ENCODE measurements at regions of chr17 and their contacts with region 1.

Region 1: GRCh38 chr17:78421484-78422266 is 43.2 kb downstream of the PGS1 start:
- DNase-seq: peak; percentile 43
- H3K4me3 ChIP-seq: no peak overlapping the region
- H3K27ac ChIP-seq: no peak overlapping the region
- H3K4me1 ChIP-seq: peaks cover 9% of the 10 kb centered on the region
- H3K27me3 ChIP-seq: no peaks in the 10 kb centered on the region
- CTCF ChIP-seq: peak; percentile 97 to 99

Region 2: DNA sequence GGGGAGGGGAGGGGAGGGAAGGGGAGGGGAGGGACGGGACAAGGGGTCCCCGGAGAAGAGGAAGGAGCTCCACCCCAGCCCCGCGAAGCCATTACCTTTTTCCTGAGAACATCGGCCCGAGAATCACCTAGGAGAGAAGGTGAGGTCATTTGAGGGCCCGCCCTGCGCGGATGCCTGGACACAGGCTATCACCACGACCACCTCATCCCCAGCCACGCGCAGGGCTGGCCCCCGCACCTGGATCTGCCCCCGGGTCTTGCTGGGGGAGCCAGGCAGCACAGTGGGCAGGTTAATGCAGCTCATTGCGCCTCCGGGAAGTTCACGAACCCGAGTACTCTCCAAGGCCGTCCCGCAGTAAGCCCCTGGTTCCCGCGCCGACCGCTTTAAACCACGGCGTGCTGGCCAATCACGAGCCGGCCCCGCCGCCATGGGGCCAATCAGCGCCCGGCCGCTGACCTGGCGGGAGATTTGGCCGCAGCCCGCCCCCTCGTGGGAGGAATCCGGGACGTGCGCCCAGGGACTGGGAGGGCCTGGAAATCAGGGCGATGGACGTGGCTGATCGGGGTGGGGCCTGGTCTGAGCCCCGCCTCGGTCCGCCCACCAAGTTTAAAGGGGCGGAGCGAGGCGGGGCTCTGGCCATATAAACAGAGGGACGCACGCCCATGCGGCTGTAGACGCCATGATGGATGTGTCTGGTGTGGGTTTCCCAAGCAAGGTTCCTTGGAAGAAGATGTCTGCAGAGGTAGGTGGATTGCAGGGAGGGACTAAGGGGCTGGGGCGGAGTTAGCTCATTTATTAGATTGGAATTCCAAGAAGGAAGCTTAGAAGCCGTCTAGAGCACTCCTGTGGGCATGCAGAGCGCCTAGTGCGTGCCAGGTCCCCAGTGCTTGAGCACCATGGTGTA is 234.7 kb before region 1 on chr17 and contains the starts of genes AFMID and TK1:
- CTCF ChIA-PET with region 1: no interaction called
- dilution Hi-C with region 1: no loop called
- in situ Hi-C with region 1: no loop called
- intact Hi-C with region 1: no loop called
- DNase-seq: peak; percentile 97
- H3K4me3 ChIP-seq: peak within 1 kb of the TSS; percentile 66 to 75 (median 71)
- H3K27ac ChIP-seq: peak within 1 kb of the TSS; percentile 57
- H3K4me1 ChIP-seq: peaks cover 13% of the 10 kb centered on the region
- H3K27me3 ChIP-seq: no peaks in the 10 kb centered on the region
- CTCF ChIP-seq: peak; percentile 43 to 86
- total RNA-seq, gene AFMID: 16.5 to 32.5 TPM
- total RNA-seq, gene TK1: 7.7 to 79.5 TPM

Region 3: GRCh38 chr17:78250891-78251794 is 170.5 kb before region 1 on chr17:
- CTCF ChIA-PET with region 1: no interaction called
- dilution Hi-C with region 1: no loop called
- in situ Hi-C with region 1: no loop called
- intact Hi-C with region 1: loop called (anchors 1 kb)
- DNase-seq: peak; percentile 81
- H3K4me3 ChIP-seq: peak overlapping the region in 2 of 3 experiments; percentile 27 to 38
- H3K27ac ChIP-seq: no peak overlapping the region
- H3K4me1 ChIP-seq: peaks cover 10% of the 10 kb centered on the region
- H3K27me3 ChIP-seq: no peaks in the 10 kb centered on the region
- CTCF ChIP-seq: peak; percentile 96 to 99

Region 4: DNA sequence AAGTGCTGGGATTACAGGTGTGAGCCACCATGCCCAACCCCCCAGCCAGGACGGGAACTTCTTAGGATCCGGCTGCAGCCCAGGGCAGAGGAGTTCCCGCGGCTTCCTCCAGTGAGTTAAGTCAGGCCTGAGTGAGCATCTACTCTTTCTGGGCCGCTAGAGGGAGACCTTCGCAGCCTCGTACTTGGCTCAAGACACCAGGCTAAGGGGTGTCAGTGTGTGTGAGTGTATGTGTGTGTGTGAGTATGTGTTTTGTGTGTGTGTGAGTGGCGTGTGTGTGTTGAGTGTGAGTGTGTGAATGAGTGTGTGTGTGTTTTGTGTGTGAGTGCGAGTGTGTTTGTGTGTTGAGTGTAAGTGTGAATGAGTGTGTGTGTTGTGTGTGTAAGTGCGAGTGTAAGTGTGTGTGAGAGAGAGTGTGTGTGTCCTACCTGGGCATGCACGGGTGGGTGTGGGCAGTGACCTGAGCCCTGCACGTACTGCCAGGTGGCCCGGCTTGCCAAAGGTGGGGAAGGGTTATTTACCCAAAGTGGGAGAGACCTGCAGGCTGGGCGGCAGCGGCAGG is 131.8 kb before region 1 on chr17:
- CTCF ChIA-PET with region 1: no interaction called
- dilution Hi-C with region 1: loop called (anchors 10 kb)
- in situ Hi-C with region 1: loop called (anchors 5 kb)
- intact Hi-C with region 1: loop called (anchors 1 kb)
- DNase-seq: peak; percentile 80
- H3K4me3 ChIP-seq: no peak overlapping the region
- H3K27ac ChIP-seq: no peak overlapping the region
- H3K4me1 ChIP-seq: peaks cover 9% of the 10 kb centered on the region
- H3K27me3 ChIP-seq: no peaks in the 10 kb centered on the region
- CTCF ChIP-seq: peak; percentile 90 to 91

Region 5: GRCh38 chr17:78360371-78361224 is 61.1 kb before region 1 on chr17:
- CTCF ChIA-PET with region 1: no interaction called
- dilution Hi-C with region 1: loop called (anchors 5 kb)
- in situ Hi-C with region 1: no loop called
- intact Hi-C with region 1: loop called (anchors 1 kb)
- DNase-seq: peak; percentile 81
- H3K4me3 ChIP-seq: peak overlapping the region; percentile 52 to 87 (median 56)
- H3K27ac ChIP-seq: peak overlapping the region; percentile 39
- H3K4me1 ChIP-seq: peaks cover 34% of the 10 kb centered on the region
- H3K27me3 ChIP-seq: no peaks in the 10 kb centered on the region
- CTCF ChIP-seq: peak; percentile 80 to 98

Region 6: DNA sequence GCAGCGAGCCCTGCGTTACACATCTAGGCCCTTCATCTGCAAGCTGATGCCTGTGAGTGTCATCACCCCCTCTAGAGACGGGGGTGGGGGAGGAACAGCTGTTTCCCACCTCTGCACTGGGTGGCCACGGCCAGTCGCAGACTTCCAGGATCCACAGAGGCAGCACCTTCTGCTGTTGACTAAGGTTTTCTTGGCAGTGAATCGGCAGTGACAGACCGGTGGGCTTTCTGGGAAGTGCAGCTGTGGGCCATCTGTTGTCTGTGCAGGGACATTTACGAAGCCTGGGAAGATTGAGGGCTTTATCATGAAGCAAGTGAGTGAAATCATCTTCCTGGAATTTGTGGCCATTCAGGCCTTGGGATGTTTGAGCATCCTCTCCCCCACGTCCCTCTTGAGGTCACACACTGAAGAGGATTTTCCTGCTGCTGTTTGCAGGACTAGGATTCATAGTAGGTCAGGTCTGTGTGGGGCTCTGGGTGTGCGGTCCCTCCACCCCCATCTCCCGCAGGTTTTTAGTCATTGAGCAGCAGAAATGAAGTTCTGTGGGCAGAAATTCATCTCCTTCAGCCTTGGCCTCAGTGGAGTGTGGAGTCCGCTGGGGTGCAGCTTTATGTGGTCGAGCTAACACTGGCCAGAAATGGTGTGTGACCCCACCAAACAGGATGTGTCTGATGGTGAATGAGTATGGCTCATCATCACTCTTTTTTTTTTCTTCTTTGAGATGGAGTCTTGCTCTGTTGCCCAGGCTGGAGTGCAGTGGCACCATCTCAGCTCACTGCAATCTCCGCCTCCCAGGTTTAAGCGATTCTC is 31.2 kb before region 1 on chr17:
- CTCF ChIA-PET with region 1: no interaction called
- dilution Hi-C with region 1: loop called (anchors 5 kb)
- in situ Hi-C with region 1: no loop called
- intact Hi-C with region 1: no loop called
- DNase-seq: no peak
- H3K4me3 ChIP-seq: no peak overlapping the region
- H3K27ac ChIP-seq: no peak overlapping the region
- H3K4me1 ChIP-seq: peaks cover 37% of the 10 kb centered on the region
- H3K27me3 ChIP-seq: no peaks in the 10 kb centered on the region
- CTCF ChIP-seq: peak in 1 of 2 donors; percentile 10

Measured in mammary epithelial cell (primary cell).